ENCODE measurements at regions of chr1 and their contacts with region 1.

Region 1: DNA sequence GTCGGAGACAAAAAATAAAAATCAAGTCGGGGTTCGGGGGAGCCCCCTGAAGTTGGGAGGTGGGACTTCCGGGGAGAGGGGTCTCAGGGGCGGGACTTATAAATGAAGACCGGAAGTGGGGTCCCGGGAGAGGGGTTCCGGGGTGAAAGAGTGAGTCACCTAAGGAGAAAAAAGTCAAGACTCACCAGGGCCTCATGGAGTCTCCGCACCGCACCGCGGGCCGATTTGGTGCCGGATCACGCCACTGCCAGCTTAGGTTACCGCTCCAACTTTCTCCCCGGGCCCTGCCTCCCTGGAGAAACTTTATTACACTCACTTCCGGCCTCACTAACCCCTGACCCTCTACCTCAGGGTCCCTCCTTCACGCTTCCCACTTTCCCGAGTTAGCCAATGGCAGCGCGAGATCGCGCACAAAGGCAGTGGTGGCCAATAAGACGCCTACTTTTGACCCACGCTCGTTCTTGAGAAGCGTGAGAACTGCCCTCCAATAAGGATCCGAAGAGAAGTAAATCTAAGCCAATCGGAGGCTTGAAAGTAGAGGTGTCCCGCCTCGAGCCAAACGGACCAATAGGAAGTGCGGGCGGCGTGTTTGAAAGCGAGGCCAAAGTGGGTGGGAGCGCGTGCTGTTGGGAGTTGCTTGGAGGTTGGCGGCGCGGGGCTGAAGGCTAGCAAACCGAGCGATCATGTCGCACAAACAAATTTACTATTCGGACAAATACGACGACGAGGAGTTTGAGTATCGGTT is at the start of gene CKS1B:
- DNase-seq: peak; percentile 100
- ATAC-seq: peak; percentile 83
- H3K4me3 ChIP-seq: peak within 1 kb of the TSS; percentile 67 to 84 (median 72)
- H3K27ac ChIP-seq: peak within 1 kb of the TSS; percentile 100
- H3K4me1 ChIP-seq: peaks cover 62% of the 10 kb centered on the region
- H3K27me3 ChIP-seq: no peaks in the 10 kb centered on the region; a peak in 1 of 5 replicates
- CTCF ChIP-seq: no peak
- EP300 ChIP-seq: peak; percentile 8 to 23; a peak in 1 of 4 replicates
- POLR2A ChIP-seq: peak in 1 of 2 experiments; percentile 72; a peak in 2 of 4 replicates
- RAD21 ChIP-seq: peak; percentile 30; the same call in 1 of the 2 replicates
- total RNA-seq, gene CKS1B: 217 and 268 TPM in 2 replicates

Region 2: GRCh38 chr1:154749078-154749760 is 225.0 kb before region 1 on chr1:
- CTCF ChIA-PET with region 1: no interaction called
- POLR2A ChIA-PET with region 1: no interaction called
- in situ Hi-C with region 1: no loop called
- intact Hi-C with region 1: no loop called
- DNase-seq: no peak
- ATAC-seq: peak; percentile 39; the same call in 1 of the 3 replicates
- H3K4me3 ChIP-seq: no peak overlapping the region
- H3K27ac ChIP-seq: no peak overlapping the region
- H3K4me1 ChIP-seq: no peaks in the 10 kb centered on the region
- H3K27me3 ChIP-seq: peaks cover 1 to 73% of the 10 kb centered on the region in 2 experiments; a peak in 2 of 5 replicates
- CTCF ChIP-seq: no peak
- EP300 ChIP-seq: no peak
- POLR2A ChIP-seq: no peak
- RAD21 ChIP-seq: no peak

Region 3: GRCh38 chr1:154831462-154831861 is 142.8 kb before region 1 on chr1:
- CTCF ChIA-PET with region 1: no interaction called
- POLR2A ChIA-PET with region 1: no interaction called
- in situ Hi-C with region 1: no loop called
- intact Hi-C with region 1: no loop called
- DNase-seq: no peak
- ATAC-seq: no peak
- H3K4me3 ChIP-seq: no peak overlapping the region
- H3K27ac ChIP-seq: no peak overlapping the region
- H3K4me1 ChIP-seq: no peaks in the 10 kb centered on the region
- H3K27me3 ChIP-seq: peaks cover 1 to 58% of the 10 kb centered on the region in 2 experiments; a peak in 4 of 5 replicates
- CTCF ChIP-seq: no peak
- EP300 ChIP-seq: no peak
- POLR2A ChIP-seq: no peak
- RAD21 ChIP-seq: no peak

Region 4: DNA sequence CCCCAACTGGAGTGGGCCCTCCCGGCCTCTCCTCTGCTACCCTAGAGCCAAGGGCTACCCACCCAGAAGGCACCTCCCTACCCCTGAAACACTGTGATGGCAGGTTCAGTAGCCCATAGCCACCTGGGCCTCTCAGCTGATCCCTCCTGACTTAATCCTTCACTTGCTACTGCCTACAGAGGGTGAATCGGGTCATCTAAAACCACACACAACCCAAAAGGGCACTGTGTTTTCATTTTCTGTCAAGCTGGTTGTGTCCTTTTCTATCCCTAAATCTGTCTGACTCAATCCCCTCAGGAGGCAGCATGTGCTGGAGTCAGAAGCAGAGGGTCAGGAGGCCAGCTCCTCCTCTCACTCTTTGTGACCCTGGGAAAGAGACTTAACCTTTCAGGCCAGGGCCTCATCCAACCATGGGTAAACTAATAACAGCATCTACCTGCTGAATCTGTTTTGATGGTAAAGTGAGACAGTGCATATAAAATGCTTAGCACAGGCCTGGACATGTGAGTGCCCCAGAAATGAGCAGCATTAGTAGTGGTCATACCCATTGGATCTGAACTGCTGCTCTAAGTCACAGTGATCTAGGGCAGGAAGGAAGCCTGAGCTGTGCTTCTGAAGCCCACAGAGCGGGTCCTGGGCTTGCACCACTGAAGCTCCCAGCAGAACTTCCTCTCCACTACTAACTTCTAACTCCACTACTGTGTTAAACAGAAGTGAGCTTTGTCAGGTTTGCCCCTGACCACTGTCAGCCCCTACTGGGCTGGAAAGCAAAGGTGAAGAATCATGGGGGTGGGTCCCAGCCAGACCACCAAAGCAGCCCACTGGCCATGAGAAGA is 48.7 kb before region 1 on chr1:
- CTCF ChIA-PET with region 1: no interaction called
- POLR2A ChIA-PET with region 1: no interaction called
- in situ Hi-C with region 1: no loop called
- intact Hi-C with region 1: no loop called
- DNase-seq: no peak
- ATAC-seq: no peak
- H3K4me3 ChIP-seq: no peak overlapping the region
- H3K27ac ChIP-seq: no peak overlapping the region
- H3K4me1 ChIP-seq: no peaks in the 10 kb centered on the region
- H3K27me3 ChIP-seq: no peaks in the 10 kb centered on the region
- CTCF ChIP-seq: no peak
- EP300 ChIP-seq: no peak
- POLR2A ChIP-seq: no peak
- RAD21 ChIP-seq: no peak

Region 5: DNA sequence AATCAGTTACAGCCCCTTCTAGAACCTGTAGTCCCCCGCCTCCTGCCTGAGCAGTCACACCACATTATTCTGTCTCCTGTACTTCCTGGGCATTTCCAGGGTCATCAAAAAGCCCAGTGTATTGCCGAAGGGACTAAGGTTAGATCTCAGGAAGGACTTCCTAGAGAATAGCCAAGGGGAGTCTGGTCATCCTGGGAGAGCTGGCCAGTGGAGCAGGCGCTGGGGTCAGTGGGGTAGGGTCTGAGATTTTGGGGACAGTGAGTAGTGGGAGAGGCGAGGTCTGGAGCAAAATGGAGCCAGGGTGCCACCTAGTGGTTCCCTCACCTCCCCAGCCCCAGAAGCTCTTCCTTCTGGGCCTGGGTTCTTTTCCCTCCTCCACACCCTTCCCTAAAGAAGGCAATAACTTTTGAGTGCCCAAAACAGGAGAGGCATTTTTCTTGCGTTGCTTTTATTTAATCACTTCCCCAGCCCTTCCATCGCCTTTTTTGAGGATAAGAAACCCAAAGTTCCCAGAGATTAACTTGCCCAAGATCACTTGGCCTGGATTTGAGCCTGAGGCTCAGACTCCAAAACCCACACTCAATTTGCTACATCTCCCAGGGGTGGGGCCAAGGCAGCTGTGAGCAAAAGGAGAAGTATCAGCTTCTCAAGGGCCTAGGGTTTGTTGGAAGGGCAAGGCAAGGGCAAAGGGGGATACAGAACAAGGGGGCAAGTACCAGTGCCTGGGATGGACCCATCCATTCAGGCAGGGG is 30.4 kb before region 1 on chr1:
- CTCF ChIA-PET with region 1: no interaction called
- POLR2A ChIA-PET with region 1: interaction called, 14 read pairs
- in situ Hi-C with region 1: no loop called
- intact Hi-C with region 1: no loop called
- DNase-seq: no peak
- ATAC-seq: peak; percentile 14; the same call in 1 of the 3 replicates
- H3K4me3 ChIP-seq: peak overlapping the region in 1 of 3 experiments; percentile 27; a peak in 2 of 6 replicates
- H3K27ac ChIP-seq: peak overlapping the region; percentile 88
- H3K4me1 ChIP-seq: peaks cover 71% of the 10 kb centered on the region
- H3K27me3 ChIP-seq: no peaks in the 10 kb centered on the region
- CTCF ChIP-seq: peak; percentile 85
- EP300 ChIP-seq: no peak
- POLR2A ChIP-seq: no peak
- RAD21 ChIP-seq: peak; percentile 76

Region 6: DNA sequence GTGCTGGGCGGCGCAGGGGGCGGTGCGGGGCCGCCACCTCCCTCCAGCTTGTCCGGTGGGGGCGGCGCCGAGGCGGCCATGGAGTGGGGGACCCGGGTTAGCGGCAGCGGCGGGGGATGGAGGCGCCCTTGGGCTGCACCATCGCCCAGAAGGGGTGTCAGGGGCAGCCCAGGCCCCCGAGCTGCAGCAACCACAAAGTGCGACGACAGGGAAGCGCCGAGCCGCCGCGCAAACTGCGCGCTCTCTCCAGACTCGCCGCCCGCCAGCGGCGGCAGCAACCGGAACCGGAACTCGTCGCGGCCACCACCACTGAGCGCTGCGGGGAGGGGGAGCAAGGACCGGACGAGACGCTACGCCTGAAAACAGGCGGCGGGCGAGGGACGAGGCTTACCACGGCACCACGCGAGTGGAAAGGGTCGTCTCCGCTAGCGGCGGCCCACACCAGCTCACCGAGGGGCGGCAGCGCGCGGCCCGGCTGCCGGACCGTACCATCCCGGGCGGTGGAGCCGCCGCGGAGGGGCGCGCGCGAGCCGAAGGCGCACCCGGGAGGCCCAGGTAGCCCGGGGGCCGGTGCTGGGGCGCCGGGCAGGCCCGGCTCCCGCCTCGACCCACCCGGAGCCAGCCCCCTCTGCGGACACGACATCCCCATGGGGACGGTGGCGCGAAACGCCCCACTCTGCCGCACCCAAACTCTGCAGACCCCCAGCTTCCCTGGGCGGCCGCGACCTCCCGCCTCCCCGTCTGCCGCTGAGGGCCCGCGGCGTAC is 12.6 kb before region 1 on chr1 and contains the start of gene PYGO2:
- CTCF ChIA-PET with region 1: interaction called, 3 read pairs
- POLR2A ChIA-PET with region 1: interaction called, 148 read pairs
- in situ Hi-C with region 1: no loop called
- intact Hi-C with region 1: loop called (anchors 2 kb)
- DNase-seq: peak; percentile 48
- ATAC-seq: peak; percentile 87
- H3K4me3 ChIP-seq: peak within 1 kb of the TSS; percentile 72 to 87 (median 80)
- H3K27ac ChIP-seq: peak within 1 kb of the TSS; percentile 96
- H3K4me1 ChIP-seq: peaks cover 48% of the 10 kb centered on the region
- H3K27me3 ChIP-seq: no peaks in the 10 kb centered on the region; a peak in 1 of 5 replicates
- CTCF ChIP-seq: peak; percentile 75
- EP300 ChIP-seq: 0 out of 4 replicates have a peak, but pooled peaks of 1 of the 2 experiments have one; percentile 3
- POLR2A ChIP-seq: peak; percentile 72 to 84
- RAD21 ChIP-seq: peak; percentile 95
- total RNA-seq, gene PYGO2: 20.3 and 21.3 TPM in 2 replicates

Region 7: DNA sequence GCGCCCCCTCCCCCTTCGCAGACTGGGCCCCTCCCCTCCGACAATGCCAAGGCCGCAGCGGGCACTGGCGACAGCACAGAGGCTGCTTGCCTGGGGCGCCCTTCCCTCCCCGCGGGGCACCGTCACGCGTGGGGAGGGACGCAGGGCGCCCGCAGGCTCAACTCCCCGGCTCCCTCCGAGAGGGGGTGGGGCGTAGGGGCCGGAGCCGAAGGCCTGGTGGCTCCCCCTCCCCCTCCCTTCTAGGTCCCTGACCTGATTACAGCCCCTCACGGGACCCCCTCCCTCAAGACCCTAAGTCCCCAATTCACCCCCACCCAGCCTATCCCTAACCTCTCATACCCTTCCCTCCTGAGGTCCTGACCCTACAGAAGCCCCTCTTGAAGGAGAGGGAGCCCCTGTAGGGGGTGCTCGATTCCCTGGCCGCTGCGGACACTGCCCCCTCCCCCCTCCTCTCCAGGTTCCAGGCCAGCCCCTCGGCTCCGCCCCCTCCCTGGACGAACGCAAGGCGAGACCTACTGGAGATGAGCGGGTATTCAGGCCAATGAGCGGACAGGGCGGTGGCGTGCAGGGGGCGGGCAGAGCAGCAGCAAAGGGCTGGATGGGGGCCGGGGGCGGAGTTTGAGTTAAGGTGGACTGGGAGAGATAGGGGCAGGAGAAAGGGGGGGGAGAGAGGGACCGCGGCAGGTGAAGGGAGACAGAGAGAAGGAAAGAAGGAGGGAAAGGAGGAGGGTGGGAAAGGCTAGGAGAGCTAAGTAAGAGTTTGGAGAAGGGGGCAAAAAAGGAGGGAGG is 27.6 kb after region 1 on chr1:
- CTCF ChIA-PET with region 1: no interaction called
- POLR2A ChIA-PET with region 1: interaction called, 86 read pairs
- in situ Hi-C with region 1: no loop called
- intact Hi-C with region 1: loop called (anchors 1 kb)
- DNase-seq: peak; percentile 97
- ATAC-seq: peak; percentile 70
- H3K4me3 ChIP-seq: peak overlapping the region; percentile 70 to 86 (median 84)
- H3K27ac ChIP-seq: peak overlapping the region; percentile 97
- H3K4me1 ChIP-seq: peaks cover 43% of the 10 kb centered on the region
- H3K27me3 ChIP-seq: no peaks in the 10 kb centered on the region; a peak in 1 of 5 replicates
- CTCF ChIP-seq: peak; percentile 71
- EP300 ChIP-seq: peak in 1 of 2 experiments; percentile 7; a peak in 1 of 4 replicates
- POLR2A ChIP-seq: no peak
- RAD21 ChIP-seq: no peak

Region 8: DNA sequence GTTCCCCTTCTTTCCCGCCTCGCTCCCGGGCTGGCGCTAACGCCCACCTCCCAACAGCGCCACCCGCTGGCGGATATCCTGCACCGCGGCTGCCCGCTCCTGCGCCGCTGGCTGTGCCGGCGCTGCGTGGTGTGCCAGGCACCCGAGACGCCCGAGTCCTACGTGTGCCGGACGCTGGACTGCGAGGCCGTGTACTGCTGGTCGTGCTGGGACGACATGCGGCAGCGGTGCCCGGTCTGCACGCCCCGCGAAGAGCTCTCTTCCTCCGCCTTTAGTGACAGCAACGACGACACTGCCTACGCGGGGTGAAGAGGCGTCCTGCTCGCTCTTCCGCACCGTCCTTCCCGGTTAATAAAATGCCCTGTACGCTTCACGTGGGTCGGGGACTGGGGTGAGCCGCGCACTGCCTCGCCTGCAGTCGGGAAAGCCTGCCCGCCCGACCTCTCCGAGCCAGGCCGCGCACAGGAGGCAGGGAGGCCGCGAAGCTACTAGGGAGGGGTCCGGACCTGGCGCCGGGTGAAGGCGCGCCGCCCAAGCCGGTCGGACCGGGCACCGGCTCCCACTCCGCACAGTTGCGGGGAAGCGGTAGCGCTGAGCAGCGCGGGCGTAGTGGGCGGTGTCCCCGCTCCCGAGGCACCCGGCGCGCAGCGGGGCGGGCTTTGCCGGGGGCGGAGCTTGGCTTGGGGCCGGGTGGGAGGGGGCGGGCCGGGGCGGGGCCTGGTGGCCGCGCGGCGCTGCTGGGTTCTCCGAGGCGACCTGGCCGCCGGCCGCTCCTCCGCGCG is 76.5 kb after region 1 on chr1 and contains the start of gene ADAM15:
- CTCF ChIA-PET with region 1: no interaction called
- POLR2A ChIA-PET with region 1: interaction called, 11 read pairs
- in situ Hi-C with region 1: no loop called
- intact Hi-C with region 1: no loop called
- DNase-seq: peak; percentile 66
- ATAC-seq: peak; percentile 79
- H3K4me3 ChIP-seq: peak within 1 kb of the TSS; percentile 59 to 88 (median 70)
- H3K27ac ChIP-seq: peak within 1 kb of the TSS; percentile 66
- H3K4me1 ChIP-seq: peaks cover 55% of the 10 kb centered on the region
- H3K27me3 ChIP-seq: no peaks in the 10 kb centered on the region
- CTCF ChIP-seq: peak; percentile 99
- EP300 ChIP-seq: no peak
- POLR2A ChIP-seq: 0 out of 4 replicates have a peak, but pooled peaks of 1 of the 2 experiments have one; percentile 7
- RAD21 ChIP-seq: peak; percentile 69
- total RNA-seq, gene ADAM15: 12.3 and 25.6 TPM in 2 replicates

Region 9: DNA sequence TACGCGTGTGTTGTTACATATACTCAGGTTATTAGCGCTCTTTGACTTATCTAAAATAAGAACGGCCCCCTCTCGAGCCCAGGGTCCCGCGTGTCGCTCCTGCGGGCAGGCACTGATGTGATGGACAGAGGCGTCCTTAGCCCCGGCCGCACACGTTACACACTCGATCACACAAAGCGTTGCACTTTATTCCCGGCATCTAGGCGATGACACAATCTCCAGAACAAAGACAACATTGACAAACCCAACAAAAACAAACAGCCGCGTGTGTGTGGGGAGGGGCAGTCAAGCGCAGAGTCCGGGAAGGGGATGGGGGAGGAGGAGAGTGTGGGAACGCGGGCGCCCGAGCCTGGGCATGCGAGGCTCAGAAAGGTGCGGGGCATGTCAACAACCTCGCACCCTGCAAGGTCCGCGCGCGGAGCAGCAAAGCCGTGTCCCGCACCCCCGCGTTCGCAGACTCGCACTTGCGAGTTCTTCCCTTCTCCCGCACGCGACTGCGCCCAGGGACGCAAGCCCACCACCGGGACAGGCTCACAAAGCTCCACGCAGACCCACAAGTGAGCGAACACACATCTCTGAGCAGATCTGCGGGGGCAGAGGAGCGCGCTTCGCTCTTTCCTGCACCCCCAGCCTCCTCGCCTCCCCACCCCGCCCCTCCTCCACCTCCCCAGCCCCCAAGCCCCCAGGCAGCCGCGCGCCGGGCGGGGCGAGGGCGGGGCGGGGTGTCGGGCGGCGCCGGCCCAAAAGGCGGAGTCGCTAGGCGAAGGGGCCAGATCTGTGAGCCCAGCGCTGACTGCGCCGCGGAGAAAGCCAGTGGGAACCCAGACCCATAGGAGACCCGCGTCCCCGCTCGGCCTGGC is 153.1 kb after region 1 on chr1 and contains the start of gene EFNA1:
- CTCF ChIA-PET with region 1: no interaction called
- POLR2A ChIA-PET with region 1: interaction called, 18 read pairs
- in situ Hi-C with region 1: no loop called
- intact Hi-C with region 1: no loop called
- DNase-seq: peak; percentile 99
- ATAC-seq: peak; percentile 61
- H3K4me3 ChIP-seq: peak within 1 kb of the TSS; percentile 96 to 99 (median 99)
- H3K27ac ChIP-seq: peak within 1 kb of the TSS; percentile 100
- H3K4me1 ChIP-seq: peaks cover 46% of the 10 kb centered on the region
- H3K27me3 ChIP-seq: no peaks in the 10 kb centered on the region; a peak in 1 of 5 replicates
- CTCF ChIP-seq: no peak
- EP300 ChIP-seq: peak; percentile 96 to 99
- POLR2A ChIP-seq: peak in 1 of 2 experiments; percentile 92; a peak in 2 of 4 replicates
- RAD21 ChIP-seq: peak; percentile 18
- total RNA-seq, gene EFNA1: 41.2 and 81.8 TPM in 2 replicates